Endothelial cell of umbilical vein (primary cell): ENCODE measurements at regions of chr19 and their contacts with region 1.

Region 1: GRCh38 chr19:39792999-39793546 is 14.4 kb downstream of the LEUTX start:
- DNase-seq: peak; percentile 78
- H3K4me3 ChIP-seq: peak overlapping the region; percentile 21 to 51 (median 29)
- H3K27ac ChIP-seq: no peak overlapping the region
- H3K4me1 ChIP-seq: no peaks in the 10 kb centered on the region
- H3K27me3 ChIP-seq: peaks cover 1 to 11% of the 10 kb centered on the region in 2 experiments
- CTCF ChIP-seq: peak; percentile 84 to 96
- POLR2A ChIP-seq: no peak

Region 2: DNA sequence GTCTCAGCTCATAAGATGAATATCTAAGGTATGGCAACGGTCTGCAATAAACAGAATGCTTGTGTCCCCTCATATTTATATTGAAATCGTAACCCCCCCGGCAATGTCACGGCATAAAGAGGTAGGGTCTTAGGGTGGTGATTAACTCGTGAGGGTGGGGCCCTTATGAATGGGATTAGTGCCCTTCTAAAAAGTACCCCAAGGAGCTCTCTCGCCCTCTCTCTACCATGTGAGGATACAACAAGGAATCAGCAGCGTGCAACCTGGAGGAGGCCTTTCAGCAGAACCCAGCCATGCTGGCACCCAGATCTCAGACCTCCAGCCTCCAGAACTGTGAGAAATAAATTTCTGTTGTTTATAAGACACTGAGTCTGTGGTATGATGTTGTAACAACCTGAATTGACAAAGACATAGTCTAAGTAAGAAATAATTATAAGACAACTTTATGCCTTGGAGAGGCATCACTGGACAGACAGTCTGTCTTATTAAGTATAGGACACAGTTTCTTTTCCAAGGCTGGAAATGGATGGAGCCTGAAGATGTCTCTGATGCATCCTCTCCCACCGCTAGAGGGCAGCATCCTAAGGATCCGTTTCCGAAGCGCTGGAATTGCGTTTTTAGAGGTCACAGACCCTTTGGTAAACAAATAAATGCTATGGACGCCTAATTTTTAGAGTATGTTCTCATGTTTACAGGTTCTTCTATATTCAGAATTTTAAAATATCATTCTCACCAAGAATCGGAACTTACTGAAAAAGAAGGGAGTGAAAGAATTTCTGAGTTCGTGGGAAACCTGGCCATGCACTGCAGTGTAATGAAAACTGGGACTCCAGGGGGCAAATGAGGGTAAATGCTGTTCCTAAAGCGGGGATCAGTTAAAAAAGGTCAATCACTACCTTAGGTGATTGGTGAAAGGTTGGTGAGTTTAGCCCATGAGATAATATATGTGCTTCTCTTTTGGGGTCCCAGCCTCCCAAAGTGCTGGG is 27.7 kb before region 1 on chr19:
- CTCF ChIA-PET with region 1: interaction called, 12 read pairs
- POLR2A ChIA-PET with region 1: no interaction called
- dilution Hi-C with region 1: no loop called
- intact Hi-C with region 1: no loop called
- DNase-seq: peak; percentile 43
- H3K4me3 ChIP-seq: no peak overlapping the region
- H3K27ac ChIP-seq: no peak overlapping the region
- H3K4me1 ChIP-seq: no peaks in the 10 kb centered on the region
- H3K27me3 ChIP-seq: no peaks in the 10 kb centered on the region
- CTCF ChIP-seq: peak; percentile 80 to 82
- POLR2A ChIP-seq: no peak

Region 3: DNA sequence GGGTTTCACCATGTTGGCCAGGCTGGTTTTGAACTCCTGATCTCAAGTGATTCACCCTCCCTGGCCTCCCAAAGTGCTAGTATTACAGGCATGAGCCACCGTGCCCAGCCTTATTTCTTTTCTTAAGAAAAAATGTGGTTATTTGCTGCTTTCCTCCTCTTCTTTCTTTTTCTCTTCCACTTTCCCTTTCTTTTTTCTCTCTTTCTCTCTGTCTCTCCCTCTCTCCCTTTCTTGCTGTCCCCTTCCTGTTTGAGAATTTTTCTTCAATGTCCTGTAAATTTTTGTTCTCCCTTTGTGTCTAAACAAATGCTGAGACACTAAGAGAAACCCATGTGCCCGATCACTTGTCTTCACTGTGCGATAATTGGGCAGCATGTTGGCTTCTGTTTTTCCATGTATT is 12.2 kb before region 1 on chr19:
- CTCF ChIA-PET with region 1: interaction called, 12 read pairs
- POLR2A ChIA-PET with region 1: no interaction called
- dilution Hi-C with region 1: no loop called
- intact Hi-C with region 1: no loop called
- DNase-seq: no peak
- H3K4me3 ChIP-seq: no peak overlapping the region
- H3K27ac ChIP-seq: no peak overlapping the region
- H3K4me1 ChIP-seq: no peaks in the 10 kb centered on the region
- H3K27me3 ChIP-seq: peaks cover 3 to 5% of the 10 kb centered on the region in 2 experiments
- CTCF ChIP-seq: no peak
- POLR2A ChIP-seq: no peak

Region 4: GRCh38 chr19:39809368-39809767 is 16.3 kb after region 1 on chr19:
- CTCF ChIA-PET with region 1: interaction called, 11 read pairs
- POLR2A ChIA-PET with region 1: no interaction called
- dilution Hi-C with region 1: no loop called
- intact Hi-C with region 1: no loop called
- DNase-seq: no peak
- H3K4me3 ChIP-seq: no peak overlapping the region
- H3K27ac ChIP-seq: no peak overlapping the region
- H3K4me1 ChIP-seq: no peaks in the 10 kb centered on the region
- H3K27me3 ChIP-seq: no peaks in the 10 kb centered on the region
- CTCF ChIP-seq: no peak
- POLR2A ChIP-seq: no peak

Region 5: DNA sequence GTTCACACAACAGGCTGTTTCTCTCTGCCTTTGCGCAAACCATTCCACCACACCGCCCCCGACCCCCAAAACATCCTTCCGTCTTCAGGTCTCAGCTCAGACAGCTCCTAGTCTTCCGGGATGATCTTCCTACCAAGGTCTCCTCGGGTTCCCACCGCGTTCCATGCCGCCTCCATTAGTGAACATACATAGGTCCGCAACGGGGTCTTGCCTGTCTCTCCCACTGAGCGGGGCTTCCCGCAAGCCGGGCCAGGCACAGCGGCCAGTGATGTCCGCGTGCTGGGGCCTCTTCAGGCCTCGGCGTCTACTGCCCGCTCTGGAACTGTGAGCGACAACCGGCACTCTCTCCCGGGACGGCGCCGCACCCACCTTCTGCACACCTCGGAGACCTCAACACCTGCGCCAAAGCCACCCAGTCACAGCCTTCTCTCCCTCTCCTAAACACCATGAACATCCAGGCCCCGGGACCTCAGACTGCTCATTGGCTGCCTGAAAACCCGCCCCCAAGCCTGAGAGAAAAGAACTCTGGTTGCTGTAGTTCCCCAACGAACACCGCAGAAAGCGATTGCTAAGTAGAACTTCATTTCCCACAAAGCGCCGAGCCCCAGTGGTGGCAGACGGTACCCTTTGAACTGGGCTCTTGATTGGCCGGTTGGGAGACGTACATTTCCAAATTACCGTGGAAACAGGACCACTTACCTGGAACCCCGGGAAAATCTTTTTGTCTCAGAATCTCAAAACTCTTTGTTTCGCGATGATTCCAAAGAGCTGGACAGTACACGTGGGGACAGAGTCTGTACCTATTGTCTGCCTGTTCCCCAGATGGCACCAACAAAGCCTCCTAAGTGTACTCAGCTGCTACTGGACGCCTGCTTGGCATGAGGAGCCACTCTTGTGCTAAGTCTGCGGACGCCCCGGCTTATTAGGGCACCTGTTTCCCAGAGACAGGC is 31.3 kb after region 1 on chr19:
- CTCF ChIA-PET with region 1: interaction called, 6 read pairs
- POLR2A ChIA-PET with region 1: no interaction called
- dilution Hi-C with region 1: no loop called
- intact Hi-C with region 1: loop called (anchors 1 kb)
- DNase-seq: peak; percentile 94
- H3K4me3 ChIP-seq: peak overlapping the region; percentile 27 to 75 (median 72)
- H3K27ac ChIP-seq: no peak overlapping the region
- H3K4me1 ChIP-seq: peaks cover 11% of the 10 kb centered on the region
- H3K27me3 ChIP-seq: no peaks in the 10 kb centered on the region
- CTCF ChIP-seq: no peak
- POLR2A ChIP-seq: peak; percentile 67

Region 6: GRCh38 chr19:39833464-39834286 is 40.6 kb after region 1 on chr19 and contains the start of gene DYRK1B:
- CTCF ChIA-PET with region 1: interaction called, 15 read pairs
- POLR2A ChIA-PET with region 1: interaction called, 3 read pairs
- dilution Hi-C with region 1: no loop called
- intact Hi-C with region 1: no loop called
- DNase-seq: peak; percentile 97
- H3K4me3 ChIP-seq: peak within 1 kb of the TSS; percentile 55 to 93 (median 66)
- H3K27ac ChIP-seq: peak within 1 kb of the TSS; percentile 77
- H3K4me1 ChIP-seq: peaks cover 8% of the 10 kb centered on the region
- H3K27me3 ChIP-seq: no peaks in the 10 kb centered on the region
- CTCF ChIP-seq: no peak
- POLR2A ChIP-seq: peak; percentile 41
- total RNA-seq, gene DYRK1B: 26.8 and 30.8 TPM in 2 replicates

Region 7: GRCh38 chr19:39846176-39846677 is 53.2 kb after region 1 on chr19 and contains the start of gene FBL:
- CTCF ChIA-PET with region 1: interaction called, 92 read pairs
- POLR2A ChIA-PET with region 1: no interaction called
- dilution Hi-C with region 1: no loop called
- intact Hi-C with region 1: loop called (anchors 1 kb)
- DNase-seq: peak; percentile 92
- H3K4me3 ChIP-seq: peak within 1 kb of the TSS; percentile 71 to 84 (median 76)
- H3K27ac ChIP-seq: peak within 1 kb of the TSS; percentile 64
- H3K4me1 ChIP-seq: peaks cover 24% of the 10 kb centered on the region
- H3K27me3 ChIP-seq: no peaks in the 10 kb centered on the region
- CTCF ChIP-seq: no peak
- POLR2A ChIP-seq: peak; percentile 78
- total RNA-seq, gene FBL: 271 and 277 TPM in 2 replicates